Left lung (tissue), 14 donors: ENCODE measurements at regions of chr13 and their contacts with region 1.

Region 1: GRCh38 chr13:110819203-110820014 is 95.5 kb downstream of the ANKRD10 start:
- DNase-seq: peak; percentile 64 to 94 (median 81)
- ATAC-seq: peak; percentile 97
- H3K4me3 ChIP-seq: no peak overlapping the region
- H3K27ac ChIP-seq: no peak overlapping the region
- H3K4me1 ChIP-seq: peaks cover 0 to 6% of the 10 kb centered on the region in 2 donors
- H3K27me3 ChIP-seq: no peaks in the 10 kb centered on the region
- CTCF ChIP-seq: peak; percentile 97 to 99

Region 2: DNA sequence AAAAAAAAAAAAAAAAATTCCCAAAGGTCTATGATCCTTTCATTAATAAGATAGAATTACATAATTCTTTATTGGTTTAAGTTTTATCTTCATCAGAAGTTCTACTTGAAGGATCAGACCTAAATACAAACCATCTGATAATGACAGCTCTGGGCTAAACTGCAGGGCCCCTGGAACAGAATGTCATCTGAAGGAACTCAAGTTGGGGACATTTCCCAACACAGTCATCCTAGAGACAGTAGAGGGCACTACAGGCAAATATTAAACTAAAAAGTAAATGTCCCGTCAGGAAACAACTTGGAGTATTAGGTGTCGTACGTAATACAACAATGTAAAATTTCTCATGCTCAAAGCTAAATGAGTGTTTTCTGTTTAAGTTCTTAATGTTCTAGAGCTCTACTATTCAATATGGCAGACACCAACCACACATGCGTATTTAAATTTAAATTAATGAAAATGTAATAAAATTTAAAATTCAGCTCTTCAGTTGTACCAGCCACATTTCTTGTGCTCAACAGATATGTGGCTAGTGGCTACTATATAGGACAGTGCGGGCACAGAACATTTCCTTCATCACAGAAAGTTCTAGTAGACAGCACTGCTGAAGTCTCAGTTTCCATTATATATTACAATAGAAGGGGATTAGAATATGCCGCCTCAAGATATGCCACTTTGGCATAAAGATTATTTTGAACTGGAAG is 225.8 kb before region 1 on chr13:
- intact Hi-C with region 1: loop called in 1 of 2 experiments (anchors 10 kb)
- DNase-seq: peak in 1 of 4 donors; percentile 68
- ATAC-seq: peak; percentile 94
- H3K4me3 ChIP-seq: no peak overlapping the region
- H3K27ac ChIP-seq: no peak overlapping the region
- H3K4me1 ChIP-seq: peaks cover 0 to 6% of the 10 kb centered on the region in 2 donors
- H3K27me3 ChIP-seq: no peaks in the 10 kb centered on the region
- CTCF ChIP-seq: peak; percentile 55 to 60

Region 3: GRCh38 chr13:110680851-110681250 is 138.6 kb before region 1 on chr13:
- intact Hi-C with region 1: loop called in 1 of 2 experiments (anchors 10 kb)
- DNase-seq: no peak
- ATAC-seq: no peak
- H3K4me3 ChIP-seq: no peak overlapping the region
- H3K27ac ChIP-seq: no peak overlapping the region
- H3K4me1 ChIP-seq: peaks cover 0 to 10% of the 10 kb centered on the region in 2 donors
- H3K27me3 ChIP-seq: no peaks in the 10 kb centered on the region
- CTCF ChIP-seq: peak in 1 of 2 donors; percentile 33

Region 4: DNA sequence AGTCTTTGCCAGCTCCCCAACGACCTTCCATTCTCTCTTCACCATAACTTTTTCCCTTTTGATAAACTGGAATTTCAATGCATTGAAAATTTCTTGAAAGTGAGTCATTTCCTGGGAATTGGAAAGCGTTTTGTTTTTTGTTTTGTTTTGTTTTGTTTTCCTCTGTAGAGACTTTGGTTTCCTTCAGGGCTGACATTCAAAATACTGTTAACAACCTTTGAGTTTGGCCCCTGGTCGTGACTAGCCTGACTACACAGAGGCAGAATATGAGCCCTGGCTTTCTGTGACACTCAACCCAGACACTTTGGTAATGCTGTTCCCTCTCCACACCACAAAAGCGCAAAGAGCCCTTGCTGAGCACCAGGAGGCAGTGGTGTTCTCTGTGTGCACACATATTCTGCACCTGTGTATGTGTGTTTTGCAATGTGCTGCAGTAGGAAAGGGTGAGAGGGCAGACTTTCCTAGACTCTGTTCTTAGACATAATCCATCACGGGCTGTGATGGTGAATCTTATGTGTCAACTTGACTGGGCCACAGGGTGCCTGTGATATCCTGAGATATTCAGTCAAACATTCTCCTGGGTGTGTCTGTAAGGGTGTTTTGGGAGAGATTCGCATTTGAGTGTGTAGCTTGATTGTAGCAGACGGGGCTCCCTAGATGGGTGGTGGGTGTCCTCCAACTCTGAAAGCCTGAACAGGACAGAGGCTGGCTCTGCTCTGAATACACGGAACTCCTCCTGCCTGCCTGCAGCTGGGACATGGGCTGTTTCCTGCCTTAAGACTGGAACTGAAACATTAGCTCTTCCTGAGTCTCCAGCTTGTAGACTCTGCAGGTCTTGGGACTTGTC is 124.9 kb after region 1 on chr13:
- intact Hi-C with region 1: no loop called
- DNase-seq: peak in 2 of 4 donors; percentile 7 to 40
- ATAC-seq: peak; percentile 93
- H3K4me3 ChIP-seq: no peak overlapping the region
- H3K27ac ChIP-seq: no peak overlapping the region
- H3K4me1 ChIP-seq: no peaks in the 10 kb centered on the region
- H3K27me3 ChIP-seq: no peaks in the 10 kb centered on the region
- CTCF ChIP-seq: peak; percentile 37 to 38